ENCODE measurements at regions of chr11 and their contacts with region 1.

Region 1: GRCh38 chr11:61733120-61733978 is 19.1 kb upstream of the MYRF start:
- DNase-seq: peak; percentile 80
- ATAC-seq: peak; percentile 94
- H3K4me3 ChIP-seq: no peak overlapping the region
- H3K27ac ChIP-seq: no peak overlapping the region
- H3K4me1 ChIP-seq: peaks cover 3% of the 10 kb centered on the region; the same call in 1 of the 2 replicates
- H3K27me3 ChIP-seq: no peaks in the 10 kb centered on the region
- CTCF ChIP-seq: peak; percentile 98
- POLR2A ChIP-seq: no peak
- RAD21 ChIP-seq: peak; percentile 96

Region 2: GRCh38 chr11:61645179-61645868 is 88.0 kb before region 1 on chr11:
- CTCF ChIA-PET with region 1: interaction called, 5 read pairs
- POLR2A ChIA-PET with region 1: no interaction called
- dilution Hi-C with region 1: no loop called
- in situ Hi-C with region 1: no loop called
- intact Hi-C with region 1: loop called (anchors 2 kb)
- DNase-seq: peak; percentile 19
- ATAC-seq: no peak
- H3K4me3 ChIP-seq: no peak overlapping the region
- H3K27ac ChIP-seq: no peak overlapping the region
- H3K4me1 ChIP-seq: peaks cover 1% of the 10 kb centered on the region; the same call in 1 of the 2 replicates
- H3K27me3 ChIP-seq: peaks cover 11% of the 10 kb centered on the region
- CTCF ChIP-seq: no peak
- POLR2A ChIP-seq: no peak
- RAD21 ChIP-seq: no peak

Region 3: GRCh38 chr11:61679893-61680621 is 53.3 kb before region 1 on chr11 and contains the start of gene DAGLA:
- CTCF ChIA-PET with region 1: interaction called, 6 read pairs
- POLR2A ChIA-PET with region 1: no interaction called
- dilution Hi-C with region 1: no loop called
- in situ Hi-C with region 1: no loop called
- intact Hi-C with region 1: loop called (anchors 1 kb)
- DNase-seq: peak; percentile 43
- ATAC-seq: peak; percentile 94
- H3K4me3 ChIP-seq: peak within 1 kb of the TSS; percentile 54
- H3K27ac ChIP-seq: no peak within 1 kb of the TSS
- H3K4me1 ChIP-seq: peaks cover 4% of the 10 kb centered on the region; the same call in 1 of the 2 replicates
- H3K27me3 ChIP-seq: peaks cover 71% of the 10 kb centered on the region
- CTCF ChIP-seq: peak; percentile 99
- POLR2A ChIP-seq: no peak
- RAD21 ChIP-seq: peak; percentile 65
- total RNA-seq, gene DAGLA: 0.83 and 0.90 TPM in 2 replicates

Region 4: GRCh38 chr11:61810671-61811175 is 77.4 kb after region 1 on chr11:
- CTCF ChIA-PET with region 1: no interaction called
- POLR2A ChIA-PET with region 1: no interaction called
- dilution Hi-C with region 1: no loop called
- in situ Hi-C with region 1: no loop called
- intact Hi-C with region 1: no loop called
- DNase-seq: no peak
- ATAC-seq: no peak
- H3K4me3 ChIP-seq: no peak overlapping the region
- H3K27ac ChIP-seq: no peak overlapping the region
- H3K4me1 ChIP-seq: no peaks in the 10 kb centered on the region
- H3K27me3 ChIP-seq: no peaks in the 10 kb centered on the region
- CTCF ChIP-seq: no peak
- POLR2A ChIP-seq: no peak
- RAD21 ChIP-seq: no peak

Region 5: DNA sequence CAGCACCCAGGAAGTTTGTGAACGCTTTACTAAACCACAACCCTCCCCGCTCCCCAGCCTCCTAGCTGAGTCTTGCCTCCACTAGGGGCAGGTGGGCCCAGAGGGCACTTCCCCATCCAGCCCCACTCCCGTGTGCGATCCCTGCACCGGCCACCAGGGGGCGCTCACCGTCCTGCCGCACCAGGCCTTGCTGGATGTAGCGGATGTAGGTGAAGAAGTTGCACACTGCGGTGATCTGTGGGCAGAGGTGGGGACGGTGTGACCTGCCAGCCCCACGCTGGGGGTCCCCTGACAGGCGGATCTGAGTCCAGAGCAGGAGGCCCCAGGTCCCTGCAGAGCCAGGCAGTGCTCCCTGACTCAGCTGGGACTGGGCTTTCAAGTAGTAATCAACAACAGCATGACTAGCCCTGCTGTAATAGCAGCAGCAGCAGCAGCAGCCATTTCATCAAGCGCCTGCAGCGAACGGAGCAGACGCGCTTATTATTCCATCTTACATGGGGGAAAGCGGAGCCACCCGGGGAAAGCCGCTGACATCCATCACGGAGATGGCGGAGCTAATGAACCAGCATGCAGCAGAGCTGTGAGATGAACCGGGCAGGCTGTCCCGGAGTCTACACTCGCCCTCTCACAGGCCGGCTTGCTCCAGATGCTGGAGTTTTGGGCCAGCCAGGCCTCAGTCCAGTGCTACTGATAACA is 165.9 kb after region 1 on chr11:
- CTCF ChIA-PET with region 1: no interaction called
- POLR2A ChIA-PET with region 1: no interaction called
- dilution Hi-C with region 1: no loop called
- in situ Hi-C with region 1: no loop called
- intact Hi-C with region 1: no loop called
- DNase-seq: peak; percentile 54
- ATAC-seq: peak; percentile 89
- H3K4me3 ChIP-seq: no peak overlapping the region
- H3K27ac ChIP-seq: no peak overlapping the region
- H3K4me1 ChIP-seq: no peaks in the 10 kb centered on the region
- H3K27me3 ChIP-seq: no peaks in the 10 kb centered on the region
- CTCF ChIP-seq: peak; percentile 98
- POLR2A ChIP-seq: no peak
- RAD21 ChIP-seq: peak; percentile 86

Measured in IMR-90 (cell line).